ENCODE measurements at regions of chr19 and their contacts with region 1.

Region 1: GRCh38 chr19:45523642-45524256 is 16.5 kb downstream of the VASP start:
- DNase-seq: peak; percentile 94
- ATAC-seq: peak; percentile 92 to 93
- H3K4me3 ChIP-seq: no peak overlapping the region
- H3K27ac ChIP-seq: peak overlapping the region in 1 of 2 experiments; percentile 47; a peak in 1 of 6 replicates
- H3K4me1 ChIP-seq: peaks cover 20% of the 10 kb centered on the region
- CTCF ChIP-seq: peak; percentile 97
- EP300 ChIP-seq: no peak
- POLR2A ChIP-seq: no peak
- RAD21 ChIP-seq: peak; percentile 97 to 98

Region 2: GRCh38 chr19:45370410-45371204 is 153.1 kb before region 1 on chr19 and contains the start of gene ERCC2:
- CTCF ChIA-PET with region 1: no interaction called
- POLR2A ChIA-PET with region 1: no interaction called
- DNase-seq: peak; percentile 98 to 99
- ATAC-seq: peak; percentile 99 to 100
- H3K4me3 ChIP-seq: peak within 1 kb of the TSS; percentile 60
- H3K27ac ChIP-seq: peak within 1 kb of the TSS; percentile 71 to 93
- H3K4me1 ChIP-seq: no peaks in the 10 kb centered on the region; the same call in 2 of the 3 replicates
- CTCF ChIP-seq: no peak
- EP300 ChIP-seq: no peak
- POLR2A ChIP-seq: peak; percentile 3; the same call in 1 of the 2 replicates
- RAD21 ChIP-seq: no peak
- polyA plus RNA-seq, gene ERCC2: 12.9 and 15.0 TPM in 2 replicates

Region 3: GRCh38 chr19:45542234-45542668 is 18.5 kb after region 1 on chr19:
- CTCF ChIA-PET with region 1: interaction called, 11 read pairs
- POLR2A ChIA-PET with region 1: no interaction called
- DNase-seq: no peak
- ATAC-seq: peak; percentile 59 to 72
- H3K4me3 ChIP-seq: no peak overlapping the region
- H3K27ac ChIP-seq: peak overlapping the region in 1 of 2 experiments; percentile 56; a peak in 3 of 6 replicates
- H3K4me1 ChIP-seq: peaks cover 8% of the 10 kb centered on the region
- CTCF ChIP-seq: no peak
- EP300 ChIP-seq: no peak
- POLR2A ChIP-seq: no peak
- RAD21 ChIP-seq: no peak

Measured in A549 (cell line).